ENCODE measurements at regions of chr3 and their contacts with region 1.

Region 1: DNA sequence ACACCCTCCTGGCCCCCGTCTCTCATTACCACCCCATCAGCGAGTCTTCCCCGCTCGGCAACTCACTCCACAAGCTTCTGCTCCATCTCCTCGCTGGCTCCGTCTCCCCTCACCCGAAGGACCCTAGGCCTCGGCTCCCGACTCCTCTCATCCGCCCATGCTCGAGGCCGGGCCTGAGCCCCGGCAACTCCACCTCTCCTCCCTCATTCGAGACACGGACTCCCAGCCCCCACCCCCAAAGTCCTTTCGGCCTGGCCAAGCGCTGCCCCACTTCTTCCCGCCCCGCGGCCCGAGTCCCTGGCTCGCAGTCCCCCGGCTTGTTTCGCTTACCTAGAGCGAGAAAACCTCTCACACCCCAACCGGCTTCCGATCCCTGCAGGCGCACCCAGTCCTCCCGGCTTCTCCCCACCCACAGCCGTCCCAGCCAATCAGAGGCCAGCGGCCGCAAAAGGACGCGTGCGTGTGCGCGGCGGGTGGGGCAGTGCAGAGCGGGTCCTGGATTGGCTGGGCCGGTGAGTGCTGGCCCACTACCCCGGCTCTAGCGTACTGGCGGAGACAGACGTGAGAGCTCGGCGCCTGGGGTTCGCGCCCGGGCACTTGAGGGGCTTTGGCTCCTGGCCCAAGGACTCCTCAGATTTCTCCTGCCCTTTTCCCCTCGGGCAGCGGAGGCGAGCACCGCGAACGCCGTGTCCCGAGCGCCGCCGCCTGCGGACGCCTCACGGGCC is at the start of gene HIGD1A:
- DNase-seq: peak; percentile 97
- H3K4me3 Mint-ChIP-seq: peak within 1 kb of the TSS; percentile 92
- H3K27ac Mint-ChIP-seq: peak within 1 kb of the TSS; percentile 90
- H3K4me1 Mint-ChIP-seq: peaks cover 22% of the 10 kb centered on the region
- H3K27me3 Mint-ChIP-seq: no peaks in the 10 kb centered on the region
- CTCF ChIP-seq: no peak
- total RNA-seq, gene HIGD1A: 140 and 161 TPM in 2 replicates

Region 2: DNA sequence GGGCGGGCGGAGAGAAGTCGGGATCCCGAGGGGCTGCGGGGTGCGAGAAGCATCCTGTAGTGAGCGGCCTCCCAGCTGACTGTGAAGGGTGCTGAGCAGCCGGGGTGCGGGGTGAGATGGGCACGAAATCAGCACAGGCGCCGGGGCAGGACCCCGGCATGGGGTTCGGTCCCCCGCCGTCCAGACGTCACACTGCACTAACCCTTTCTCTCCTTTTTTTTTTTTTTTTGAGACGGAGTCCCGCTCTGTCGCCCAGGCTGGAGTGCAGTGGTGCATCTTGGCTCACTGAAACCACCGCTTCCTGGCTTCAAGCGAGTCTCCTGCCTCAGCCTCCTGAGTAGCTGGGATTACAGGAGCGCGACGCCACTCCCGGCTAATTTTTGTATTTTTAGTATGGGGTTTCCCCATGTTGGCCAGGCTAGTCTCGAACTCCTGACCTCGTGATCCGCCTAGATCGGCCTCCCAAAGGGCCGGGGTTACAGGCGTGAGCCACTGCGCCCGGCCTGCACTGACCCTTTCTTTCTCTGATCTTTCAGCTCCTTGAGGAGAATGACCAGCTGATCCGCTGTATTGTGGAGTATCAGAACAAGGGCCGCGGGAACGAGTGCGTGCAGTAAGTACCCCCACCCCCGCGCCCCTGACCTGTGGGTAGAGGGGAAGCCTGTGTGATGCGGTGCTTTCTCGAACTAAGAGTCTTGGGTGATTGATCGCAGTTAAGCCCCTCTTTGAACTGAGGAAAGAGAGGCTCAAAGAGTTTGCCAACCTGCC is 213.1 kb before region 1 on chr3:
- CTCF ChIA-PET with region 1: no interaction called
- POLR2A ChIA-PET with region 1: interaction called, 11 read pairs
- intact Hi-C with region 1: no loop called
- DNase-seq: no peak
- H3K4me3 Mint-ChIP-seq: peak overlapping the region; percentile 83
- H3K27ac Mint-ChIP-seq: peak overlapping the region; percentile 52
- H3K4me1 Mint-ChIP-seq: peaks cover 14% of the 10 kb centered on the region
- H3K27me3 Mint-ChIP-seq: no peaks in the 10 kb centered on the region
- CTCF ChIP-seq: no peak

Region 3: GRCh38 chr3:42786212-42786611 is 18.1 kb before region 1 on chr3:
- CTCF ChIA-PET with region 1: interaction called, 5 read pairs
- POLR2A ChIA-PET with region 1: interaction called, 51 read pairs
- intact Hi-C with region 1: no loop called
- DNase-seq: no peak
- H3K4me3 Mint-ChIP-seq: no peak overlapping the region
- H3K27ac Mint-ChIP-seq: no peak overlapping the region
- H3K4me1 Mint-ChIP-seq: peaks cover 22% of the 10 kb centered on the region
- H3K27me3 Mint-ChIP-seq: no peaks in the 10 kb centered on the region
- CTCF ChIP-seq: no peak

Region 4: DNA sequence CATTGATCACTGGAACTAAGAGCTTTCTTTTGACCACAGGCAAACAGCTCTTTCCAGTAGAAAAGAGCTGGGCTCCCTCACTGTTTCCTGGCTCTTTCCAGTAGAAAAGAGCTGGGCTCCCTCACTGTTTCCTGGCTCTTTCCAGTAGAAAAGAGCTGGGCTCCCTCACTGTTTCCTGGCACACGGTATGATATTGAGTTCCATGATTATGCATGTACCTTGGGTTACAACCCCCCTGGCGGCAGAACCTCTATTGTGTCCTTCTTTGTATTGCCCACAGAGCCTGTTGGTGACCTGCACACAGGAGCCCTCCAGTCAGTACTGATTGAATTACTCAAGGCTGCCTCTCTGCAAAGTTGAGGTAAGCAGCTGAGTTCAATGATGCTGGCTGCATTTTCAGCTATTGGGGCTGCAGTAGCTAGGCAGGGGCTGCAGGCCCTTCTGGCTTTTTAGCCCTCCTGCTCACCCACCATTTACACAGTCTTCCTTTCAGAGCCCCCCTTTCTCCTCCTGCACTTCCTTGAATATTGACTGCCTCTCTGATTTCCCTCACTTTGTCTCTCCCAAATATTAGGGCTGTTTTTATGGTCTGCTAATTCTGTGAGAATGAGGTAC is 15.2 kb after region 1 on chr3:
- CTCF ChIA-PET with region 1: interaction called, 5 read pairs
- POLR2A ChIA-PET with region 1: interaction called, 104 read pairs
- intact Hi-C with region 1: no loop called
- DNase-seq: peak; percentile 58
- H3K4me3 Mint-ChIP-seq: no peak overlapping the region
- H3K27ac Mint-ChIP-seq: no peak overlapping the region
- H3K4me1 Mint-ChIP-seq: peaks cover 38% of the 10 kb centered on the region
- H3K27me3 Mint-ChIP-seq: no peaks in the 10 kb centered on the region
- CTCF ChIP-seq: no peak

Region 5: GRCh38 chr3:44375450-44375849 is 1571.2 kb after region 1 on chr3:
- CTCF ChIA-PET with region 1: no interaction called
- POLR2A ChIA-PET with region 1: no interaction called
- intact Hi-C with region 1: no loop called
- DNase-seq: no peak
- H3K4me3 Mint-ChIP-seq: no peak overlapping the region
- H3K27ac Mint-ChIP-seq: no peak overlapping the region
- H3K4me1 Mint-ChIP-seq: no peaks in the 10 kb centered on the region
- H3K27me3 Mint-ChIP-seq: no peaks in the 10 kb centered on the region
- CTCF ChIP-seq: no peak

Measured in MCF 10A (cell line).